Right lobe of liver (tissue), 6 donors: ENCODE measurements at regions of chr9 and their contacts with region 1.

Region 1: GRCh38 chr9:107597743-107598217 is 108.2 kb upstream of the KLF4 start:
- DNase-seq: peak; percentile 60 to 65 (median 64)
- ATAC-seq: peak; percentile 92 to 95 (median 94)
- H3K4me3 ChIP-seq: no peak overlapping the region
- H3K27ac ChIP-seq: no peak overlapping the region
- H3K4me1 ChIP-seq: peaks cover 0 to 12% (median 0%) of the 10 kb centered on the region in 4 donors
- H3K27me3 ChIP-seq: no peaks in the 10 kb centered on the region
- CTCF ChIP-seq: no peak
- POLR2A ChIP-seq: peak; percentile 48

Region 2: GRCh38 chr9:107983181-107983603 is 385.4 kb after region 1 on chr9:
- intact Hi-C with region 1: loop called in 1 of 2 experiments (anchors 10 kb)
- DNase-seq: no peak
- ATAC-seq: no peak
- H3K4me3 ChIP-seq: no peak overlapping the region
- H3K27ac ChIP-seq: no peak overlapping the region
- H3K4me1 ChIP-seq: no peaks in the 10 kb centered on the region
- H3K27me3 ChIP-seq: no peaks in the 10 kb centered on the region
- CTCF ChIP-seq: no peak
- POLR2A ChIP-seq: no peak